ENCODE measurements at regions of chr5 and their contacts with region 1.

Region 1: GRCh38 chr5:59810041-59810440 is 83.5 kb downstream of the PDE4D start:
- DNase-seq: peak; percentile 57
- H3K4me3 ChIP-seq: no peak overlapping the region
- H3K27ac ChIP-seq: no peak overlapping the region
- H3K4me1 ChIP-seq: no peaks in the 10 kb centered on the region
- H3K27me3 ChIP-seq: no peaks in the 10 kb centered on the region
- CTCF ChIP-seq: peak; percentile 60 to 89 (median 84)
- POLR2A ChIP-seq: no peak

Region 2: GRCh38 chr5:60382716-60383115 is 572.7 kb after region 1 on chr5:
- intact Hi-C with region 1: loop called (anchors 5 kb)
- DNase-seq: no peak
- H3K4me3 ChIP-seq: no peak overlapping the region
- H3K27ac ChIP-seq: no peak overlapping the region
- H3K4me1 ChIP-seq: peaks cover 5% of the 10 kb centered on the region
- H3K27me3 ChIP-seq: no peaks in the 10 kb centered on the region
- CTCF ChIP-seq: peak in 2 of 4 experiments; percentile 8 to 30
- POLR2A ChIP-seq: no peak

Region 3: GRCh38 chr5:60586307-60586901 is 776.4 kb after region 1 on chr5:
- intact Hi-C with region 1: loop called (anchors 2 kb)
- DNase-seq: no peak
- H3K4me3 ChIP-seq: no peak overlapping the region
- H3K27ac ChIP-seq: no peak overlapping the region
- H3K4me1 ChIP-seq: peaks cover 3% of the 10 kb centered on the region
- H3K27me3 ChIP-seq: no peaks in the 10 kb centered on the region
- CTCF ChIP-seq: peak in 3 of 4 experiments; percentile 39 to 71 (median 66)
- POLR2A ChIP-seq: no peak

Region 4: DNA sequence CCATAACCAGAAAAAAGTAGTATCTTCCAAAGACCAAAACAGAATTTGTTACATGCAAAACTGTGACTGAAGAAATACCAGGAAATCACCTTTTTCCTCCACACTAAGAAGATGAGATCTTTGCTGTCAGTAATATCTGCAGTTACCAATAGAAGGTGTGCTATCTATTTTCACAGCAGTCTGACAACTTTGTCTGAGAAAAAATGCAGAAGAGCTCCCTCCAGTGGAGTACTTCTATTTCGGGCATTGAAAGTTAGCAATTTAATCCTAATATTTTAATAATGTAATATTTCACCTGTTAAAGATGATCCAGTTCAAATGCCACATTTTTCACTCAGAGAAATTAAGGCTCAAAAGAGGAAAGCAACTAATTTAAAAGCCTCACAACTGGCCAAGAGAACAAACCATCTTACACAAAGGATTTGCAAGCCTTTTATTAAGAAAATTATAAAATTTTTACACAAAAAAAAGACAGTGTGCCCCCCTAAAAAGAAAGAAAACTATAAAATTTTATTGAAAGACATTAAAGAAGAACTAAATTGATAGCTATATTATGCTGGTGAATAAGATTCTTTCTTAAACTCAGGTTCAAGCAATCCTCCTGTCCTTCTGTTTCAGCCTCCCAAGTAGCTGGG is 839.4 kb after region 1 on chr5:
- intact Hi-C with region 1: loop called (anchors 2 kb)
- DNase-seq: no peak
- H3K4me3 ChIP-seq: no peak overlapping the region
- H3K27ac ChIP-seq: no peak overlapping the region
- H3K4me1 ChIP-seq: no peaks in the 10 kb centered on the region
- H3K27me3 ChIP-seq: no peaks in the 10 kb centered on the region
- CTCF ChIP-seq: peak in 3 of 4 experiments; percentile 46 to 64 (median 53)
- POLR2A ChIP-seq: no peak